ENCODE measurements at regions of chr5 and their contacts with region 1.

Region 1: GRCh38 chr5:148290271-148291195 is 21.7 kb upstream of the SPINK7 start:
- DNase-seq: no peak
- H3K4me3 Mint-ChIP-seq: no peak overlapping the region
- H3K27ac Mint-ChIP-seq: no peak overlapping the region
- H3K4me1 Mint-ChIP-seq: peaks cover 11% of the 10 kb centered on the region
- H3K27me3 Mint-ChIP-seq: no peaks in the 10 kb centered on the region
- CTCF ChIP-seq: peak; percentile 61

Region 2: DNA sequence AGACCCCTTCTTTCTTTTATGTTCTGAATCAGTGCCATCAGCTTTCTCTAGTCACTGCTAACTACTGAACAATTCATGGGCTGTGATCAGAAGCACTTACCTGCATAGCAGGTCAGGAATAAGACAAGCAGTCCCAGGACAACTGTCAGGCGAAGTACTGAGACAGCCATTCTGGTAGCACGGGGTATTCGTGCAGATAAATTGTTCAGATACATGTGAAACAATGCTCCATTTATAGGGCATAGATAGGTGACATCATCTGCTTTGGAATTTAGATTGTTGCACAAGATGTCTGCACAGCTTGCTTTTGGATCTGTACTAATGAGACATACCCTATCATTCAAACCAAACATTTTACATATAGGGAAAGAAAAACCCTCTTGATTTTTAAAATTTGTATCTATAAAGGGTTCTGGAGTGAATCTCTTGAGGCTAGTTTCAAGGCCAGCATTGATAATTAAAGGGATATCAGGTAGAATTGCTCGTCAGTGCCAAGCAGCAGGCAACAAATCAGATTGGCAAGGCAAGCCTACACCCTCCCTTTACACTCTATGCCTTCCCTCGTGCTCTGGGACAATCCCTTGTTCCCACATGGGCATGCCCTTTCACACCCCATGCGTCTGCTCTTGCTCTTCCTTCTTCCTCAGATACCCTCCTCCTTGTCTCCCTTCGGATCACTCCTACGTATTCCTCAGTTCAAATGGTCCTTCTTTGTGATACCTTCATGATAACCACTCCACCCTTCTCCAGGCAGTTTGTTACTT is 384.0 kb before region 1 on chr5 and contains the start of gene C5orf46:
- CTCF ChIA-PET with region 1: interaction called, 10 read pairs
- intact Hi-C with region 1: no loop called
- DNase-seq: peak; percentile 29
- H3K4me3 Mint-ChIP-seq: peak within 1 kb of the TSS; percentile 34
- H3K27ac Mint-ChIP-seq: peak within 1 kb of the TSS; percentile 83
- H3K4me1 Mint-ChIP-seq: peaks cover 22% of the 10 kb centered on the region
- H3K27me3 Mint-ChIP-seq: no peaks in the 10 kb centered on the region
- CTCF ChIP-seq: no peak
- total RNA-seq, gene C5orf46: 0.97 TPM in 1 of 2 replicates, not detected in the other

Region 3: GRCh38 chr5:148179234-148179824 is 111.2 kb before region 1 on chr5:
- CTCF ChIA-PET with region 1: no interaction called
- intact Hi-C with region 1: loop called (anchors 5 kb)
- DNase-seq: peak; percentile 18
- H3K4me3 Mint-ChIP-seq: no peak overlapping the region
- H3K27ac Mint-ChIP-seq: no peak overlapping the region
- H3K4me1 Mint-ChIP-seq: no peaks in the 10 kb centered on the region
- H3K27me3 Mint-ChIP-seq: no peaks in the 10 kb centered on the region
- CTCF ChIP-seq: peak; percentile 18

Region 4: GRCh38 chr5:148202531-148203203 is 87.9 kb before region 1 on chr5 and contains the start of gene SPINK6:
- CTCF ChIA-PET with region 1: no interaction called
- intact Hi-C with region 1: loop called (anchors 5 kb)
- DNase-seq: no peak
- H3K4me3 Mint-ChIP-seq: no peak within 1 kb of the TSS
- H3K27ac Mint-ChIP-seq: no peak within 1 kb of the TSS
- H3K4me1 Mint-ChIP-seq: no peaks in the 10 kb centered on the region
- H3K27me3 Mint-ChIP-seq: no peaks in the 10 kb centered on the region
- CTCF ChIP-seq: no peak
- total RNA-seq, gene SPINK6: not detected in 2 replicates

Region 5: GRCh38 chr5:148353634-148354033 is 63.1 kb after region 1 on chr5:
- CTCF ChIA-PET with region 1: interaction called, 6 read pairs
- intact Hi-C with region 1: loop called (anchors 1 kb)
- DNase-seq: no peak
- H3K4me3 Mint-ChIP-seq: no peak overlapping the region
- H3K27ac Mint-ChIP-seq: no peak overlapping the region
- H3K4me1 Mint-ChIP-seq: no peaks in the 10 kb centered on the region
- H3K27me3 Mint-ChIP-seq: no peaks in the 10 kb centered on the region
- CTCF ChIP-seq: no peak

Region 6: GRCh38 chr5:148374692-148375360 is 84.3 kb after region 1 on chr5:
- CTCF ChIA-PET with region 1: interaction called, 14 read pairs
- intact Hi-C with region 1: loop called (anchors 1 kb)
- DNase-seq: peak; percentile 64
- H3K4me3 Mint-ChIP-seq: no peak overlapping the region
- H3K27ac Mint-ChIP-seq: no peak overlapping the region
- H3K4me1 Mint-ChIP-seq: peaks cover 18% of the 10 kb centered on the region
- H3K27me3 Mint-ChIP-seq: no peaks in the 10 kb centered on the region
- CTCF ChIP-seq: peak; percentile 71